CD4-positive, alpha-beta memory T cell (primary cell): ENCODE measurements at regions of chr2 and their contacts with region 1.

Region 1: GRCh38 chr2:33583194-33583938 is 15.7 kb downstream of the FAM98A start:
- DNase-seq: peak; percentile 25 to 39 (median 36)
- H3K4me3 ChIP-seq: no peak overlapping the region
- H3K4me3 Mint-ChIP-seq: no peak overlapping the region
- H3K27ac ChIP-seq: no peak overlapping the region
- H3K27ac Mint-ChIP-seq: peak overlapping the region in 1 of 7 donors; percentile 43
- H3K4me1 ChIP-seq: peaks cover 5% of the 10 kb centered on the region
- H3K4me1 Mint-ChIP-seq: peaks cover 0 to 6% (median 2%) of the 10 kb centered on the region in 4 donors
- H3K27me3 ChIP-seq: no peaks in the 10 kb centered on the region
- H3K27me3 Mint-ChIP-seq: no peaks in the 10 kb centered on the region

Region 2: GRCh38 chr2:32553829-32554432 is 1029.4 kb before region 1 on chr2:
- CTCF ChIA-PET with region 1: interaction called, 4 read pairs
- POLR2A ChIA-PET with region 1: no interaction called
- intact Hi-C with region 1: loop called (anchors 5 kb)
- DNase-seq: peak in 4 of 5 donors; percentile 17 to 29 (median 25)
- H3K4me3 ChIP-seq: no peak overlapping the region
- H3K4me3 Mint-ChIP-seq: no peak overlapping the region
- H3K27ac ChIP-seq: no peak overlapping the region
- H3K27ac Mint-ChIP-seq: peak overlapping the region in 1 of 7 donors; percentile 42
- H3K4me1 ChIP-seq: no peaks in the 10 kb centered on the region
- H3K4me1 Mint-ChIP-seq: peaks cover 0 to 2% (median 0%) of the 10 kb centered on the region in 4 donors
- H3K27me3 ChIP-seq: no peaks in the 10 kb centered on the region
- H3K27me3 Mint-ChIP-seq: no peaks in the 10 kb centered on the region

Region 3: DNA sequence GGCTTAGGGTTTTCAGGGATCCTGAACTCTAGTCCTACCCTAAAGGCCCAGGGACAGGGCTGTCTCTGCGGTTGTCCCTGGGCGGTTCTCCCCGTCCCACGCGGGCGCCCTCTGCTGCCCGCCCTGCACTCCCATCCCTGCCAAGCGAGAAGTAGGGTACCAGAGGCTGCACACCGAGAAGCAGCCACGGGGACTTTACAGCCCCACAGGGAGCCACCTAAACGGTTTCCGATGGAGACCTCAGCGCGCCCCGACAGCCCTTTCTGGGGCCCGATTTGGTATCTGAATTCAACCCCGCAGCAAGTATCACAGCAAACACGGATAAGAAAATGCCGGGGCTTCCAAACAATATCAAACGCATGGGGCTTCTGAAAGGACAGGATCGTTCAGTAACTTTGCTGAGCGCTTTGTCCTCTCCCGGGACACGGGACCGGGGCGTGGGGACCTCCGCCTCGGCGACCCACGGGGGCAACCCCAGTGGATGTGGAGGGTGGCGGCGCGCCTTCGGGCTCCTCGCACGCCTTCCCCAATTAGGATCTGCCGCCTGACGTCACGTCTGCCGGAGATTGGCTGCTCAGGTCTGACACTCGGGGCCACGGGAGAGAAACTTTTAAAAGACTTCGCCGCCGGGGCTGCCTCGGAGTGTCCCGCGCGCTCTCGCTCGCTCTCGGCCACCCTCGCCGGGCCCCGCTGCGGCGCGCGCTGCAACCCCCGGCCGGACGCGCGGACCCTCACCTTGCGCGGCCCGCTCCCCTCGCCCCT is 636.9 kb before region 1 on chr2 and contains the start of gene LTBP1:
- CTCF ChIA-PET with region 1: no interaction called
- POLR2A ChIA-PET with region 1: interaction called, 3 read pairs
- intact Hi-C with region 1: loop called (anchors 2 kb)
- DNase-seq: peak; percentile 46 to 63 (median 59)
- H3K4me3 ChIP-seq: peak within 1 kb of the TSS; percentile 36 to 50
- H3K4me3 Mint-ChIP-seq: peak within 1 kb of the TSS; percentile 82 to 87 (median 84)
- H3K27ac ChIP-seq: no peak within 1 kb of the TSS
- H3K27ac Mint-ChIP-seq: peak within 1 kb of the TSS in 1 of 7 donors; percentile 83
- H3K4me1 ChIP-seq: no peaks in the 10 kb centered on the region
- H3K4me1 Mint-ChIP-seq: peaks cover 0 to 5% (median 3%) of the 10 kb centered on the region in 4 donors
- H3K27me3 ChIP-seq: no peaks in the 10 kb centered on the region
- H3K27me3 Mint-ChIP-seq: peaks cover 7 to 16% of the 10 kb centered on the region in 2 donors
- total RNA-seq, gene LTBP1: 0.44 TPM in 1 of 2 experiments, not detected in the other

Region 4: DNA sequence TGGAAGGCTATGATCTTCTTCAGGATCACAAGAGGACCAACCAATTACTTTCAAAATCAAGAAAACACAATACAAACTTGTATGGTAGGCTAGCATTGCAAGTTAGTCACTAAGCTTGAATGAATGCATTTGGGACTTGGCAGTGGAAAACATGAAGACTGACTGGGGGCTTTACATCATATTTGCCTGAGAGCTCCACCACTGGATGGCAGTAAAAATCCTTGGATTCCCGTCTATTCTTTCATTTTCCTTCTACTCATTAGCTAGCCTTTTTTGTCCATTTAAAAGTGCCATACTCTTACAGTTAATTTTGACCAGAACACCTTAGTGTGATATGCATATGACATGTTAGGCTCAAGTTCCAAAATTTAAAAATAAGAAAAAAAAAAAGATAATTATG is 170.4 kb before region 1 on chr2:
- CTCF ChIA-PET with region 1: interaction called, 6 read pairs
- POLR2A ChIA-PET with region 1: no interaction called
- intact Hi-C with region 1: loop called (anchors 2 kb)
- DNase-seq: no peak
- H3K4me3 ChIP-seq: no peak overlapping the region
- H3K4me3 Mint-ChIP-seq: no peak overlapping the region
- H3K27ac ChIP-seq: no peak overlapping the region
- H3K27ac Mint-ChIP-seq: no peak overlapping the region
- H3K4me1 ChIP-seq: no peaks in the 10 kb centered on the region
- H3K4me1 Mint-ChIP-seq: no peaks in the 10 kb centered on the region
- H3K27me3 ChIP-seq: no peaks in the 10 kb centered on the region
- H3K27me3 Mint-ChIP-seq: peaks cover 9 to 11% of the 10 kb centered on the region in 2 donors

Region 5: DNA sequence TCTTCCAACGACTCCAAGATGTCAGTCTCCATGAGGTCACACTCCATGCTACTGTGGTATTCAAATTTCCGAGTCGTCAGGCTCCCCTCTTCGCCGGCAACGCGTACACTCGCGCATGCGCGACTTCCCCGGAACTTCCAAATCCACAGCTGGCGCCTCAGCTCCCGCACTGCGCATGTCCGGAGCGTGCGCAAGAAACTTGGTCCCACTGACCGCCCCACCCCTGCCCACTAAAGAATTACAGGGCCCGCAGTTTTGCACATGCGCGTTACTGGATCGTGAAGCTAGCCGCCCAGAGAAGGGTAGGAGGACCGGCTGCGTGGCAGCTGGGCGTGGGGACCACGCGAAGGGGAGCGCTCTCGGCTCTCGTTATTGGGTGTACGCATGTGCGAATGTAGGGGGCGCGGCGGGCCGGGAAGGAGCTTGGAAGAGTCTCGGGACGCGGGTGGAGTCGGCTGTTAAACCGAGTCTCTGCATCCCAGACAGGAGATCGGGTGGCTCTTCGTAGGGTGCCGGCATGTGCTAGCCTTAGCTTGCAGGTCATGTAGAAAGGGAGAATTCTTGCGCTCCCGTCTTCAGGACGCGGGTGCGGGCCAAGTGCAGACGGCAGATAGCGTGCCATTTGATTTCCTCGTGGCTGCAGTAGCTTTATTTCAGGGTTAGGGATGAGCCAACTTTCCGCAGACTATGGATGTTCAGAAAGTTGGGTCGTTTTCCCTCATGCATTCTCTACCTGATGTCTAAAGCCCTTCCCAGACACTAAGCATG is 16.0 kb after region 1 on chr2 and contains the start of gene FAM98A:
- CTCF ChIA-PET with region 1: interaction called, 17 read pairs
- POLR2A ChIA-PET with region 1: interaction called, 21 read pairs
- intact Hi-C with region 1: loop called (anchors 1 kb)
- DNase-seq: peak; percentile 98 to 99 (median 99)
- H3K4me3 ChIP-seq: peak within 1 kb of the TSS; percentile 63 to 96
- H3K4me3 Mint-ChIP-seq: peak within 1 kb of the TSS; percentile 94 to 100 (median 98)
- H3K27ac ChIP-seq: peak within 1 kb of the TSS; percentile 80
- H3K27ac Mint-ChIP-seq: peak within 1 kb of the TSS; percentile 90 to 99 (median 97)
- H3K4me1 ChIP-seq: peaks cover 32% of the 10 kb centered on the region
- H3K4me1 Mint-ChIP-seq: peaks cover 23 to 44% (median 35%) of the 10 kb centered on the region in 4 donors
- H3K27me3 ChIP-seq: no peaks in the 10 kb centered on the region
- H3K27me3 Mint-ChIP-seq: no peaks in the 10 kb centered on the region
- total RNA-seq, gene FAM98A: 32.7 to 38.2 TPM